Calu3 (cell line): ENCODE measurements at regions of chr15 and their contacts with region 1.

Region 1: DNA sequence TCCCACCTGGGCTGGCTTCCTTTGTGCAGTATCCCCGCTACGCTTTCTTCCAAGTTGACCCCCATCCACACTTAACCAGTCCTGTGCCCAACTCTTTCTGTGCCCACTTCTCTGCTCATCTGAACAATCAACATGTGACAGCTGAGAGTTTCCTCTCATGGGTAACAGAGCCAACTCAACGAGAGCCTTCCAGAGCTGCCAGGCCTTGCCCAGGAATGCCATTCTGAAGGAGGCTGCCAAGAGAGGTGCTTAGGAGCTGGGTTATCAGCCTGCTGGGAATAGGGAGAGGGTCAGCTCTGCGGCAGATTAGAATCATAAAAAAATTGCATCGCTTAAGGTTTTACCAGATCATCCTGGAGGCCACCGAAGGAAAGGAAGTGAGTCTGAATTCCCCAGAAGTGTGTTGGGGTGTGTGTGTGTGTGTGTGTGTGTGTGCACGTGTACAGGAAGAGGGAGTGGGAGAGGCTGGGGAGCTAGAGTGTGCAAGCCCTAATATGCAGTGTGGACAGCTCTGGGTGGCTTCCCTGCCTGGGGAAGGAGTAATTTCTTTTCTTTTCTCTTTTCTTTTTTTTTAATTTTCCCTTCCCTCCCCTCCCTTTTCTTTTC is 66.7 kb downstream of the ITGA11 start:
- DNase-seq: no peak
- H3K4me3 Mint-ChIP-seq: no peak overlapping the region
- H3K27ac Mint-ChIP-seq: no peak overlapping the region
- H3K4me1 Mint-ChIP-seq: no peaks in the 10 kb centered on the region
- H3K27me3 Mint-ChIP-seq: no peaks in the 10 kb centered on the region
- CTCF ChIP-seq: no peak

Region 2: GRCh38 chr15:66661432-66662096 is 1703.7 kb before region 1 on chr15:
- CTCF ChIA-PET with region 1: interaction called, 15 read pairs
- intact Hi-C with region 1: no loop called
- DNase-seq: no peak
- H3K4me3 Mint-ChIP-seq: no peak overlapping the region
- H3K27ac Mint-ChIP-seq: no peak overlapping the region
- H3K4me1 Mint-ChIP-seq: no peaks in the 10 kb centered on the region
- H3K27me3 Mint-ChIP-seq: no peaks in the 10 kb centered on the region
- CTCF ChIP-seq: no peak

Region 3: GRCh38 chr15:68608206-68608843 is 243.1 kb after region 1 on chr15:
- CTCF ChIA-PET with region 1: no interaction called
- intact Hi-C with region 1: no loop called
- DNase-seq: no peak
- H3K4me3 Mint-ChIP-seq: no peak overlapping the region
- H3K27ac Mint-ChIP-seq: no peak overlapping the region
- H3K4me1 Mint-ChIP-seq: no peaks in the 10 kb centered on the region
- H3K27me3 Mint-ChIP-seq: peaks cover 59% of the 10 kb centered on the region
- CTCF ChIP-seq: no peak